Transverse colon (tissue), 4 donors: ENCODE measurements at regions of chr6 and their contacts with region 1.

Region 1: DNA sequence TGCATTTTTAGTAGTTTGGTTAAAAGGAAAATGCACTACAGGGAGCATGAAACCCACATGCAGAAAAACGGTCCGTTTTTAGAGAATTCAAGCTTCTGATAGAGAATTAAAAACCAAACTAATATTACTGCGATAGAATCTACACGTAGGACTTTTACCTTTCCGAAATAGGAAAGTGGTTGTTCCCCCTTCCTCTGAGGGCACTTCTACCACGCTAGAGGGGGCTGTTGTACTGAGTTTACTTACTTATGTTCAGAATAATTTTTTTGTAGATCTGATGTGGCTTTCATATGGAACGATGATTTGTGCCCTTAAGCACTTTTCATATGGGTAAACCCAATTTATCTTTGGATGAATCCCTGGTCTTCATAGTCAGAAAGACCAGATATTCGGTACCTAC is 264.3 kb upstream of the PLN start:
- DNase-seq: peak; percentile 9
- H3K4me3 ChIP-seq: no peak overlapping the region
- H3K27ac ChIP-seq: no peak overlapping the region
- H3K4me1 ChIP-seq: peaks cover 0 to 6% (median 0%) of the 10 kb centered on the region in 4 donors
- H3K27me3 ChIP-seq: no peaks in the 10 kb centered on the region
- CTCF ChIP-seq: peak; percentile 28 to 56 (median 47)
- EP300 ChIP-seq: no peak
- POLR2A ChIP-seq: no peak

Region 2: DNA sequence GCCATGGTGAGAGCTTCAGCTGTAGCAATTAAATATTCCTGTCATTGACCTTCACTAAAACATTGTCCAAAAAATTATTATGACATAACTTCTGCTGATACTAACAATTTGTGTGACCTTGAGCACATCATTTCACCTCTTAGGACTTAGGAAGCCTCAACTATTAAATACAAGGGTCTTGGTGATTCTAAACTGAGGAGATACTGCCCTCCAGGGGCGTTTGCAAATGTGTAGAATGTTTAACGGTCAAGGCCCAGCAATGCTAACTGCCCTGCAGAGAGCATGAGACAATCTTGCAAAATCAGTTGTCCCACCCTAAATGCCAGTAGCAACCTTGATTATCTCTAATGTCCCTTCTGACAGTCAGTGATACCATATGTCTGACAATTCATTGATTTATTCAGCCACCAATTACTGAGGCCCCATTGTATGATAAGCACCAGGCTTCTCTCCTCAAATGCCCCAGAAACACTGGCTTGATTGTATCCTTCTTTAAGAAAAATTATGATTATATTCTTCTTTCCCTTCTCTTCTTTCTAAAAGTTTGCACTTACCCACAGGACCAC is 19.8 kb before region 1 on chr6:
- in situ Hi-C with region 1: no loop called
- intact Hi-C with region 1: no loop called
- DNase-seq: no peak
- H3K4me3 ChIP-seq: no peak overlapping the region
- H3K27ac ChIP-seq: no peak overlapping the region
- H3K4me1 ChIP-seq: no peaks in the 10 kb centered on the region
- H3K27me3 ChIP-seq: no peaks in the 10 kb centered on the region
- CTCF ChIP-seq: peak in 1 of 5 experiments; percentile 14
- EP300 ChIP-seq: no peak
- POLR2A ChIP-seq: no peak

Region 3: DNA sequence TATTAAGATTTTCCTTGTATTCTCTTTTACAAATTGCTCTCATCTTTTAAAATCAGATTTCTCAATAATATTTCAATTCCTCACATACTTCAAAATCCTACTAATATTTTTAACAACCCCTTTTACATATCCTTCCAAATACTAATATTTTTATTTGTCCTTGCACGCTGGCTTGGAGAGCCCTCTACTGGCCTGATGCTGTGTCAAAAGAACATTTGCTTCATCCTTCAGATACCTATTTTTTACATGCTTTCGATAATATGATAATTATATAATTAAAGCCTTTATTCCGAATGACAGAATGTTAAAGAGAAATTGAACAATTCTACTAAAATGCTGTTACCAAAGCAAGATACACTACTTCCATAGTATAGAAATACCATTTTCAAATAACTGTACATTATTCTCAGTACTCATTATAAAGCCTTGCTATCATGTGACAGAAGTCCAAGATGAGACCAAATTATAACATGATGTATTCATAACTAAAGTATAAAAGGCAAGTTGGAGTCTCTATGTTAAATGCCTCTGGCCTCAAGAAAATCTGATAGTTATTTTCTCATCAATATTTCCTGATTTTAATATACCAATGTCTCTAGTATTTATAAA is 225.3 kb after region 1 on chr6:
- in situ Hi-C with region 1: loop called in 2 of 4 experiments (anchors 10 to 25 kb)
- intact Hi-C with region 1: loop called (anchors 5 kb)
- DNase-seq: no peak
- H3K4me3 ChIP-seq: no peak overlapping the region
- H3K27ac ChIP-seq: no peak overlapping the region
- H3K4me1 ChIP-seq: no peaks in the 10 kb centered on the region
- H3K27me3 ChIP-seq: no peaks in the 10 kb centered on the region
- CTCF ChIP-seq: peak in 3 of 5 experiments; percentile 37 to 46 (median 45)
- EP300 ChIP-seq: no peak
- POLR2A ChIP-seq: no peak

Region 4: GRCh38 chr6:118580585-118581419 is 297.0 kb after region 1 on chr6:
- in situ Hi-C with region 1: no loop called
- intact Hi-C with region 1: loop called (anchors 5 kb)
- DNase-seq: no peak
- H3K4me3 ChIP-seq: no peak overlapping the region
- H3K27ac ChIP-seq: no peak overlapping the region
- H3K4me1 ChIP-seq: peaks cover 0 to 7% (median 2%) of the 10 kb centered on the region in 4 donors
- H3K27me3 ChIP-seq: no peaks in the 10 kb centered on the region
- CTCF ChIP-seq: peak; percentile 67 to 76 (median 73)
- EP300 ChIP-seq: no peak
- POLR2A ChIP-seq: no peak

Region 5: GRCh38 chr6:118618679-118619377 is 335.1 kb after region 1 on chr6:
- in situ Hi-C with region 1: loop called in 2 of 4 experiments (anchors 10 to 25 kb)
- intact Hi-C with region 1: loop called (anchors 10 kb)
- DNase-seq: peak; percentile 68
- H3K4me3 ChIP-seq: no peak overlapping the region
- H3K27ac ChIP-seq: no peak overlapping the region
- H3K4me1 ChIP-seq: no peaks in the 10 kb centered on the region
- H3K27me3 ChIP-seq: no peaks in the 10 kb centered on the region
- CTCF ChIP-seq: peak; percentile 83 to 91 (median 89)
- EP300 ChIP-seq: no peak
- POLR2A ChIP-seq: no peak

Region 6: GRCh38 chr6:118776607-118777549 is 493.1 kb after region 1 on chr6:
- in situ Hi-C with region 1: loop called in 3 of 4 experiments (anchors 25 kb)
- intact Hi-C with region 1: no loop called
- DNase-seq: peak; percentile 59
- H3K4me3 ChIP-seq: no peak overlapping the region
- H3K27ac ChIP-seq: no peak overlapping the region
- H3K4me1 ChIP-seq: peaks cover 0 to 7% (median 0%) of the 10 kb centered on the region in 4 donors
- H3K27me3 ChIP-seq: no peaks in the 10 kb centered on the region
- CTCF ChIP-seq: peak; percentile 60 to 70 (median 66)
- EP300 ChIP-seq: no peak
- POLR2A ChIP-seq: no peak